Transverse colon (tissue), 4 donors: ENCODE measurements at regions of chr5 and their contacts with region 1.

Region 1: GRCh38 chr5:135578685-135579341 is at the start of gene CXCL14:
- DNase-seq: peak; percentile 34
- H3K4me3 ChIP-seq: peak within 1 kb of the TSS in 3 of 4 donors; percentile 12 to 46 (median 21)
- H3K27ac ChIP-seq: peak within 1 kb of the TSS; percentile 51 to 67 (median 58)
- H3K4me1 ChIP-seq: no peaks in the 10 kb centered on the region
- H3K27me3 ChIP-seq: peaks cover 51% of the 10 kb centered on the region
- CTCF ChIP-seq: no peak
- EP300 ChIP-seq: no peak
- POLR2A ChIP-seq: peak; percentile 54
- total RNA-seq, gene CXCL14: 11.5 to 31.0 (median 21.7) TPM

Region 2: DNA sequence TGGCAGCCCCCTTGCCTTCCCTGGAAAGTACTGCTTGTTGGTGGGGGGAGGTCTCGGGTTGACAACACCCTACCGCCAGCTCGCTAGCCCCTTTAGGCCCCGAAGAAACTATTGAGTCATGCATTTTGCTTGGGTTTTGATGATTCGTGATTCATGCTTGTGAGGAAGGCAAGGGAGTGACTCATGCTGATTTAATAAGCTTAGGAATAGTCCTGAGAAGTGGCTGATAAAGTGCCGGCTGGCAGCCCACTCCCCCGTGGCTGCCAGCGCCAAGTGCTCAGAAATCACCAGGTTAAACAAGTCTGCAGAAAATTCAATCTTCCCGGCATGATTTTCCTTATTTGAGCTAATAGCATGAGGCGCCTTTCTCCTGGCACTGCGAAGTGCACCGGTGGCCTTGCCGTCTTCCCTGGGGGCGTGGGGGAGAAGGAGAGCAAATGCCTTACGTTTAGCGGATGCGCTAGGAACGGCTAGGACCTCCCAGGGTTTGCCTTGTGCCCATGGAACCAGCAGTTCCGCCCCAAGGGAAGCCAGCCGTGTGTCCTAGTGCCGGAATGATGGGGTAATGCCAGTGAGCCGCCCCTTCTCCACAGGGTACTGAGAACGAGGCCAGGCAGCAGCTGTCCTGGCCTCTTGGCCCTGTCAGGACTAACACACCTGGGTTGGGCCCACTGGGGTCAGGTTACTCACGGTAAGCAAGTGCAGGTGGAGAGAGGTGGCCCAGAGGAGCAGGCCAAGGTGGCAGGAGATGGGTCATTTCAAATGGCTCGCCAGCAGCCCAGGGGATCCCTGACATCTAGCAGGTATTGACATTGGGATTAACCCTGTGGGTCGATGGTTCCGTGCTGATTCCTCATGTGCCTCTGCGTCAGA is 331.7 kb before region 1 on chr5:
- in situ Hi-C with region 1: no loop called
- intact Hi-C with region 1: no loop called
- DNase-seq: no peak
- H3K4me3 ChIP-seq: no peak overlapping the region
- H3K27ac ChIP-seq: peak overlapping the region in 1 of 4 donors; percentile 26
- H3K4me1 ChIP-seq: peaks cover 23 to 48% (median 30%) of the 10 kb centered on the region in 4 donors
- H3K27me3 ChIP-seq: no peaks in the 10 kb centered on the region
- CTCF ChIP-seq: no peak
- EP300 ChIP-seq: no peak
- POLR2A ChIP-seq: no peak

Region 3: DNA sequence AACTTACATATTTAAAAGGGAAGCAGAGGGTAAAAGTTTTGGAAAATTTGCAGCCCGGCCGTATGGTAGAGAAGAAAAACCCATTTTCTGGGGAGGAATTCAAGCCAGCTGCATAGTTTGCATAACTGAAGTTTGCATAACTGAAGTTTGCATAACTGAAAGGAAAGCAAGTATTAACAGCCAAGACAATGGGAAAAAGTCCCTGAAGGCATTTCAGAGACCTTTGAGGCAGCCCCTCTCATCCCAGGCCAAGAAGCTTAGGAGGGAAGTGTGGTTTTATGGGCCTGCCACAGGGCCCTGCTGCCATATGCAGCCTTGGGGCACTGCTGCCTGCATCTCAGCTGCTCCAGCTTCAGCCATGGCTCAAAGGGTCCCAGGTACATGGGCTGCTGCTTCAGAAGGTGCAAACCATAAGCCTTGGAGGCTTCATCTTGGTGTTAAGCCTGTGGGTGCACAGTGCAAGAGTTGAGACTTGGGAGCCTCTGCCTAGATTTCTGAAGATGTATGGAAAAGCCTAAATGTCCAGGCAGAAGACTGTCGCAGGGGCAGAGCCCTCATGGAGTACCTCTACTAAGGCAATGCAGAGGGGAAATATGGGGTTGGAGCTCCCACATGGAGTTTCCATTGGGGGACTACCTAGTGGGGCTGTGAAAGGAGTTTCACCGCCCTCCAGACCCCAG is 36.9 kb after region 1 on chr5:
- in situ Hi-C with region 1: no loop called
- intact Hi-C with region 1: loop called (anchors 1 kb)
- DNase-seq: no peak
- H3K4me3 ChIP-seq: no peak overlapping the region
- H3K27ac ChIP-seq: no peak overlapping the region
- H3K4me1 ChIP-seq: no peaks in the 10 kb centered on the region
- H3K27me3 ChIP-seq: peaks cover 5% of the 10 kb centered on the region
- CTCF ChIP-seq: no peak
- EP300 ChIP-seq: no peak
- POLR2A ChIP-seq: no peak